MCF 10A (cell line): ENCODE measurements at regions of chr2 and their contacts with region 1.

Region 1: DNA sequence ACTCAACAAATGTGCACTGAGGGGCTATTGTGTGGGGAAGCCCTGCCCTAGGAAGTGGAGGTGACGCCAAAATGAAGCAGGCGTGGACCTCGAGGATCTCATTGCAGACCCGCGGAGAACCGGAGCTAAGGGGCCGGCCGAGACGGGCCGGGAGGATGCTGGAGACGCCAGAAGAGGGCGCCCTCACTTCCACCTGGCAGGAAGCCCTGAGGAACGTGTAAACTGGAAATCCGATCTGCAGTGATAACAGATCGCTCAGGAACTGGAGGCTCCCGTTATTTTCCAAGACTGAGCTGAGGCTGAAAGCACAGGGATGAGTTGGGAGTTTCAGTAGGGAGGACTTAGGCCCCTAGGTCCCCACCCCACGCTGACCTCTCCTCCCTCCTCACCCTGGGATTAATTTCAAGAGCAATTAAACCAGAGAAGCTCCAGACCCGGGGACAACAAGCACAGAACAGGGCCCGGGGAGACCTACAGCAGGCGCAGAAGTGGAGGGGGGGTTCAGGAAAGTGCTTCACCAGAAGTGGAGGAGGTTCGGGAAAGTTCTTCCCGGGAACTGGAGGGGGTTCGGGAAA is 7.7 kb upstream of the COL6A3 start:
- DNase-seq: peak; percentile 84
- H3K4me3 Mint-ChIP-seq: peak overlapping the region; percentile 35
- H3K27ac Mint-ChIP-seq: peak overlapping the region; percentile 13
- H3K4me1 Mint-ChIP-seq: peaks cover 19% of the 10 kb centered on the region
- H3K27me3 Mint-ChIP-seq: no peaks in the 10 kb centered on the region
- CTCF ChIP-seq: peak; percentile 76

Region 2: GRCh38 chr2:237465515-237466218 is 44.0 kb after region 1 on chr2:
- CTCF ChIA-PET with region 1: interaction called, 5 read pairs
- POLR2A ChIA-PET with region 1: no interaction called
- intact Hi-C with region 1: loop called (anchors 2 kb)
- DNase-seq: peak; percentile 93
- H3K4me3 Mint-ChIP-seq: no peak overlapping the region
- H3K27ac Mint-ChIP-seq: peak overlapping the region; percentile 99
- H3K4me1 Mint-ChIP-seq: peaks cover 29% of the 10 kb centered on the region
- H3K27me3 Mint-ChIP-seq: no peaks in the 10 kb centered on the region
- CTCF ChIP-seq: no peak

Region 3: GRCh38 chr2:237547841-237548416 is 126.3 kb after region 1 on chr2:
- CTCF ChIA-PET with region 1: no interaction called
- POLR2A ChIA-PET with region 1: no interaction called
- intact Hi-C with region 1: no loop called
- DNase-seq: no peak
- H3K4me3 Mint-ChIP-seq: no peak overlapping the region
- H3K27ac Mint-ChIP-seq: no peak overlapping the region
- H3K4me1 Mint-ChIP-seq: no peaks in the 10 kb centered on the region
- H3K27me3 Mint-ChIP-seq: no peaks in the 10 kb centered on the region
- CTCF ChIP-seq: no peak